Activated CD4-positive, alpha-beta T cell treated with anti-CD3 and anti-CD28 coated beads for 36 hours (primary cell): ENCODE measurements at regions of chr2 and their contacts with region 1.

Region 1: DNA sequence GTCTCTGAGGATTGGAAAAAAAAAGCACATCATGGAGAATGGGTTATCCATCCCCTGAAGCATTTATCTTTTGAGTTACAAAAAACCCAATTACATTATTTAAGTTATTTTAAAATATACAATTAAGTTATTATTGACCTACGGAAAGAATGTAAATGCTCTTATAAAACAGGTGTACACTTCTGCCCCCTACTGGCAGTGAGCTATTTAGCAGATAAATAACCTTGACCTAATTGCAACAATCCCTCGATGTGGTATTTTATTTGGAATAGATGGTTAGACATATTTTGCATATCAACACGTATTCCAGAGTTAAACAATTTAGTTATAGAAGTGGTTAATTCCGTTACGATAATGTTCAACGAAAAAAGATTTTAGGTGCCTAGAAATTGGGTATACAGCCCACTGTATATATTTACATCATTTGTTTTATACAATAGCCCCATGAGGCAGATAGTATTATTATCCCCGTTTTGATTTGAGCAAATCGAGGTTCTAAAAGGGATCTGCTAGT is 9.1 kb upstream of the DAW1 start:
- DNase-seq: peak; percentile 49
- ATAC-seq: no peak
- H3K4me3 Mint-ChIP-seq: no peak overlapping the region
- H3K27ac Mint-ChIP-seq: no peak overlapping the region
- H3K4me1 Mint-ChIP-seq: peaks cover 3% of the 10 kb centered on the region
- H3K27me3 Mint-ChIP-seq: peaks cover 8% of the 10 kb centered on the region

Region 2: DNA sequence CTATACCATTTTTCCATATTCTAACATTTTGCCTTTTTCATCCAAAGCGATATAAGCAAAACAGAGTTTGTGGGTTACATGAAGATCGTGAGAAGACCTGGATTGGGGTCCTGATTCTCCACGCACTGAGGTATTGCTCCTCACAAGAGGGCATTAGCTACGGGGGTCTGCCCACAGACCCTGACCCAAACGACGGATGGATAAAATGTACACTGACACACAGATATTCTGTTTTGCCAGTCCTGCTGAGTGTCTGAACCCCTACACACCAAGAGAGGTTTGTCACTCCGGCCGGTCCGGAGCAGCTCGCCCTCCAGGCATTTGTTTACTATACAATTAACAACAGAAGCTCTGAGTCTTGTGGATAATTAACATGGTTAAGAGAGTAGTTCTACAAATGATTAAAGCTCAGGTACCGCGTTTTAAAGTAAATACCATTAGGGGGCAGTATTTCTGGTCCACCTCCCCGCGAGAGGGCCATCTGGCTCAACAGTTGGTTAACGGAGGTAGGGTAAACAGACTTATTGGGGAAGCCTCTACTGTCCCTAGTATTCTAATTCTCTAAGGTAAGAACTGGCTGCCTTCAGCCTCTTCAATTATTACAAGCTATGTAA is 88.2 kb before region 1 on chr2:
- CTCF ChIA-PET with region 1: interaction called, 12 read pairs
- POLR2A ChIA-PET with region 1: no interaction called
- intact Hi-C with region 1: loop called (anchors 1 to 10 kb)
- DNase-seq: peak; percentile 38
- ATAC-seq: peak; percentile 58
- H3K4me3 Mint-ChIP-seq: no peak overlapping the region
- H3K27ac Mint-ChIP-seq: no peak overlapping the region
- H3K4me1 Mint-ChIP-seq: peaks cover 17% of the 10 kb centered on the region
- H3K27me3 Mint-ChIP-seq: no peaks in the 10 kb centered on the region